ENCODE measurements at regions of chr2 and their contacts with region 1.

Region 1: GRCh38 chr2:219388127-219388844 is 574 bp upstream of the DNPEP start:
- DNase-seq: peak; percentile 97 to 99 (median 98)
- H3K4me3 ChIP-seq: peak overlapping the region; percentile 30
- H3K4me3 Mint-ChIP-seq: peak overlapping the region; percentile 63 to 96 (median 72)
- H3K27ac ChIP-seq: peak overlapping the region; percentile 77
- H3K27ac Mint-ChIP-seq: peak overlapping the region; percentile 90 to 96 (median 92)
- H3K4me1 ChIP-seq: peaks cover 22% of the 10 kb centered on the region
- H3K4me1 Mint-ChIP-seq: peaks cover 11 to 36% (median 22%) of the 10 kb centered on the region in 4 donors
- H3K27me3 ChIP-seq: no peaks in the 10 kb centered on the region
- H3K27me3 Mint-ChIP-seq: no peaks in the 10 kb centered on the region

Region 2: GRCh38 chr2:218406209-218406948 is 981.9 kb before region 1 on chr2:
- CTCF ChIA-PET with region 1: no interaction called
- POLR2A ChIA-PET with region 1: no interaction called
- intact Hi-C with region 1: loop called (anchors 5 kb)
- DNase-seq: peak; percentile 88 to 92 (median 91)
- H3K4me3 ChIP-seq: peak overlapping the region; percentile 34 to 63
- H3K4me3 Mint-ChIP-seq: peak overlapping the region; percentile 80 to 91 (median 87)
- H3K27ac ChIP-seq: peak overlapping the region; percentile 71
- H3K27ac Mint-ChIP-seq: peak overlapping the region; percentile 93 to 100 (median 96)
- H3K4me1 ChIP-seq: peaks cover 62% of the 10 kb centered on the region
- H3K4me1 Mint-ChIP-seq: peaks cover 32 to 67% (median 50%) of the 10 kb centered on the region in 4 donors
- H3K27me3 ChIP-seq: no peaks in the 10 kb centered on the region
- H3K27me3 Mint-ChIP-seq: no peaks in the 10 kb centered on the region

Region 3: DNA sequence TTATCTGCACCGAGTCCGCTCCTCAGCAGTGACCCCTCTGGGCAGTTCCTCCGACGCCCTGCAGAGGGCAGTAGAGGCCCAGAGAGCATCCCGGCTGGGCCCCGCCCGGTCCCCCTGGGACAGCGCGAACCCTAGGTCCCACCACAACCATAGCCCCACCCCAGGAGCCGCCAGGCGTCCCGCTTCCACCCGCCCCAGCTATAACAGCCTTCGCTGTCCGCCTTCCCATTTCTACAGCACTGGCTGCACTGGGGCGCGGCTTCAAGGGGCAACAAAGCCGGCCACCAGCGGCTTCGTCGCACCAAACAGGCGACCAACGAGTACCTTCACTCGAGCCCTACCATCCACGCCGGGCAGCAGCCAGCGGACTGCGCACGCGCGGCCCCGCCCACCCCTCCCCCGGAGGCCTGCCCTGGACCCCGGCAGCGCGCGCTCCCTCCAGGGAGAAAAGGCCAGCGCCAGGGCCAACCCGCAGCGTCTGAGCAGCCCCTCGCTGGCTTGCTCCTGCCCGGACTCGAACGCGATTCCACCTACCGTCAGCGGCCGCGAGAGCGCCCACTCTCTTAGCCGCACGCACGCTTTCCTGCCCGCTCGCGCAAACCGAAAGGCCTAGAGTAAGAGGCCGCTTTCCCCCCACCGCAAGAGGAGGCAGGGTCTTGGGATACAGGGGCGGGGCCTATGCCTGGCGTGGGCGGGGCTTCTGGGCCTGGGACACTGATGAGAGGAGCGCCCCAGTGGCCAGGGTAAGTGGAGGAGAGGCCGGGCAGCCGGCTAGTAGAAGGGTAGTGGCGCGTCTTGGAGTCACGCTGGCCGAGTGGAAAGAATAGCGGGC is 227.9 kb before region 1 on chr2 and contains the start of gene NHEJ1:
- CTCF ChIA-PET with region 1: interaction called, 6 read pairs
- POLR2A ChIA-PET with region 1: interaction called, 3 read pairs
- intact Hi-C with region 1: loop called (anchors 1 kb)
- DNase-seq: peak; percentile 90 to 97 (median 93)
- H3K4me3 ChIP-seq: peak within 1 kb of the TSS in 1 of 2 donors; percentile 70
- H3K4me3 Mint-ChIP-seq: peak within 1 kb of the TSS; percentile 89 to 98 (median 94)
- H3K27ac ChIP-seq: peak within 1 kb of the TSS; percentile 71
- H3K27ac Mint-ChIP-seq: peak within 1 kb of the TSS; percentile 88 to 99 (median 95)
- H3K4me1 ChIP-seq: peaks cover 12% of the 10 kb centered on the region
- H3K4me1 Mint-ChIP-seq: peaks cover 14 to 21% (median 18%) of the 10 kb centered on the region in 4 donors
- H3K27me3 ChIP-seq: no peaks in the 10 kb centered on the region
- H3K27me3 Mint-ChIP-seq: no peaks in the 10 kb centered on the region
- total RNA-seq, gene NHEJ1: 14.1 to 15.5 TPM

Region 4: DNA sequence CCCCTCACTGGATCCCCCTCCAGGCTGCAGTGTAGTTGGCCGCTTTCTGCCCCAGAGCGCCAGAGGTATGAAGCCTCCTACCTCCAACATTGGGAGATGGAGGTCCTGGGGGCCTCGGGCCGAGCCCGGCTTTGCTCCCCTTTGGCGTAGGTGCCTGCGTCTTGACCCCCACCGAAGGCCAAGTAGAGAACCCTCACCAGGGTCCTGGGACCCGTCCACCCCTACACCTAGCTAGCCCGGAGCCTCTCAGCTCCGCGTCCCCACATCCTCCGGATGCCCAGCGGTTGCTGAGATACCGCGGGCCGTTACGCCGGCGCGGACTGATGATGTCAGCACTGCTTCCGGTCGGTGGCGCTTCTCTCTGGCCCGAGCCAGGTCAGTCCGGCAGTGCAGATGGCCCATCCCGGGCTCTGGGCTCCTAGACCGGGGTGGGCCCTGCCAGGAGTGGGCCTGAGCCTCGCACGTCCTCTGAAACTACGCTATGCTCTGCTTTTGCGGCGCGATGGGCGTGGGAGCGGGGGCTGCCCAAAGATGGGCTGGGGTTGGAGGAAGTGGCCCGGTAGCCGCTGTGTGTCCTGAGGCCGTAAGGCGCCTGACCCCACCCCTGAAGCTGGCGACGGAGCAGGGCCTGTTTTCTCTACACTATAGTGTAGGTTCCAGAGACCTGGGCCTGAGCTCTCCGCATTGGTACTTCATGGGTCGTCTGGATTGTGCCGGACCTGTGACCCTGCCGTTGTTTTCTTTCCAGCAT is 143.0 kb before region 1 on chr2 and contains the starts of genes GLB1L and STK16:
- CTCF ChIA-PET with region 1: no interaction called
- POLR2A ChIA-PET with region 1: interaction called, 13 read pairs
- intact Hi-C with region 1: no loop called
- DNase-seq: peak; percentile 85 to 88 (median 86)
- H3K4me3 ChIP-seq: peak within 1 kb of the TSS; percentile 45 to 97
- H3K4me3 Mint-ChIP-seq: peak within 1 kb of the TSS; percentile 85 to 99 (median 94)
- H3K27ac ChIP-seq: peak within 1 kb of the TSS; percentile 94
- H3K27ac Mint-ChIP-seq: peak within 1 kb of the TSS; percentile 96 to 99 (median 99)
- H3K4me1 ChIP-seq: peaks cover 59% of the 10 kb centered on the region
- H3K4me1 Mint-ChIP-seq: peaks cover 39 to 80% (median 56%) of the 10 kb centered on the region in 4 donors
- H3K27me3 ChIP-seq: no peaks in the 10 kb centered on the region
- H3K27me3 Mint-ChIP-seq: no peaks in the 10 kb centered on the region
- total RNA-seq, gene GLB1L: 1.5 to 2.5 TPM
- total RNA-seq, gene STK16: 19.3 to 21.1 TPM

Region 5: GRCh38 chr2:219294356-219295351 is 93.6 kb before region 1 on chr2:
- CTCF ChIA-PET with region 1: interaction called, 8 read pairs
- POLR2A ChIA-PET with region 1: interaction called, 4 read pairs
- intact Hi-C with region 1: loop called (anchors 5 kb)
- DNase-seq: peak; percentile 84 to 91 (median 88)
- H3K4me3 ChIP-seq: peak overlapping the region; percentile 11 to 17
- H3K4me3 Mint-ChIP-seq: peak overlapping the region; percentile 59 to 84 (median 78)
- H3K27ac ChIP-seq: peak overlapping the region; percentile 33
- H3K27ac Mint-ChIP-seq: peak overlapping the region; percentile 70 to 94 (median 88)
- H3K4me1 ChIP-seq: peaks cover 12% of the 10 kb centered on the region
- H3K4me1 Mint-ChIP-seq: peaks cover 6 to 21% (median 11%) of the 10 kb centered on the region in 4 donors
- H3K27me3 ChIP-seq: no peaks in the 10 kb centered on the region
- H3K27me3 Mint-ChIP-seq: peaks cover 4 to 6% of the 10 kb centered on the region in 2 donors

Region 6: GRCh38 chr2:219530048-219530963 is 142.0 kb after region 1 on chr2:
- CTCF ChIA-PET with region 1: interaction called, 12 read pairs
- POLR2A ChIA-PET with region 1: no interaction called
- intact Hi-C with region 1: no loop called
- DNase-seq: peak; percentile 79 to 84 (median 81)
- H3K4me3 ChIP-seq: no peak overlapping the region
- H3K4me3 Mint-ChIP-seq: no peak overlapping the region
- H3K27ac ChIP-seq: no peak overlapping the region
- H3K27ac Mint-ChIP-seq: peak overlapping the region in 1 of 7 donors; percentile 41
- H3K4me1 ChIP-seq: no peaks in the 10 kb centered on the region
- H3K4me1 Mint-ChIP-seq: peaks cover 0 to 7% (median 0%) of the 10 kb centered on the region in 4 donors
- H3K27me3 ChIP-seq: peaks cover 26% of the 10 kb centered on the region
- H3K27me3 Mint-ChIP-seq: peaks cover 53 to 66% of the 10 kb centered on the region in 2 donors

Measured in CD4-positive, alpha-beta memory T cell (primary cell).